ENCODE measurements at regions of chr6 and their contacts with region 1.

Region 1: GRCh38 chr6:37177077-37177934 is 7.4 kb downstream of the PIM1 start:
- DNase-seq: no peak
- ATAC-seq: no peak
- H3K4me3 Mint-ChIP-seq: peak overlapping the region in 9 of 10 donors; percentile 26 to 76 (median 49)
- H3K27ac Mint-ChIP-seq: peak overlapping the region; percentile 72 to 99 (median 86)
- H3K4me1 Mint-ChIP-seq: peaks cover 40 to 81% (median 70%) of the 10 kb centered on the region in 4 donors
- H3K27me3 Mint-ChIP-seq: no peaks in the 10 kb centered on the region

Region 2: DNA sequence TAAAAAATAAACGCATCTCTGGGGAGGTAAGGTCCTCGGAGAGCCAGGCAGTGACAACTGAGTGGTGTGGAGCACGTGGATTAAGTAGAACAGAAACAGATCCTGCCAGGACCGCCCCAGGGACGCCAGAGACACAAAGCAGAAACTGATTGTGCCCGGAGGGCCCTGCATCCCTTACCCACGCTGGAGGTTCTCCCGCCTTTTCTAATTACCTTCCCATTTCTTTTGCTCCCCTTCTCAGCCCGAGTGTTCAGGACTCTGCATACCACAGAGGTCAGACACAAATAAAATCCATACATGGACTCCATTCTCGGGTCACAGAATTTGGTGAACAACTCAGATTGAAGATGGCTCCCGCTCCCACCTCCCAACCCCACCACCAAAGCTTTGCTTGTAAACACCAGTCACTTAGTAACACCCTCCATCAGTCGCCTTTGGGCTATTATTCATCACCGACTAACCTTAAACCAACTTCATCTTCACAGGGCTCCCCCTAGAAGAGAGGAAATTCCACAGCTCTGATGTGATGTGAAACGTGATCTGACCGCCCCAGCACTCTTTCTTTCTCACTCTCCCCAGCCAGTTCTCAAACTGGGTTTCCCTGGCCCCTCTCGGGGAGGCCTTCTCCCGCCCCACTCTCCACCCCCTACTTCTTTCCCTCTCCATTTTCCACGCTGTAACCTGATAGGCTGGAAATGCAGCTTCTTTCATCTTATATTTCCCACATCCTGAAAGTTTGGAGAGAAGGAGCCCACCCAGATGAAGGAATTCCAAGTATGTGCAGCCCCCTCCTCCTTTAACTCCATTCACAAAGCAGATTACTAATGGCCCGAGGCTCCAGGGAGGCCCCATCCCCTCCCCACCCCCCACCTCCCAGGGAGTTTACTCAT is 39.9 kb before region 1 on chr6:
- POLR2A ChIA-PET with region 1: no interaction called
- DNase-seq: peak in 1 of 10 donors; percentile 9
- ATAC-seq: no peak
- H3K4me3 Mint-ChIP-seq: peak overlapping the region in 2 of 10 donors; percentile 21 to 26
- H3K27ac Mint-ChIP-seq: peak overlapping the region in 2 of 10 donors; percentile 79 to 84
- H3K4me1 Mint-ChIP-seq: peaks cover 0 to 16% (median 8%) of the 10 kb centered on the region in 4 donors
- H3K27me3 Mint-ChIP-seq: no peaks in the 10 kb centered on the region

Region 3: DNA sequence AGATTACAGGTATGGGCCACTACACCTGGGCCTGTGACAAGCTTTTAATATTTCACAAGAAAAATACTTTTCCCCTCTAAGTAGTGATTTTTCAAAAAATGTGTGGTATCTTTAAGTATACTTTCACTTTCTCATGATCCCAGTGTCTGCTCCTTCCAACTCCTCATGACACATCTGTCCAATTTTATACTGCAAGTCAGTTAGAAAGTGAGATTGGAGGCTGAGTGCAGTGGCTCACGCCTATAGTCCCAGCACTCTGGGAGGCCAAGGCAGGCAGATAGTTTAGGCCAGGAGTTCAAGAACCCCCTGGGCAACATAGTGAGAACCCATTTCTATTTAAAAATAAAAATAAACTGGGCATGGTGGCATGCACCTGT is 12.8 kb after region 1 on chr6:
- POLR2A ChIA-PET with region 1: interaction called, 14 read pairs
- DNase-seq: no peak
- ATAC-seq: no peak
- H3K4me3 Mint-ChIP-seq: peak overlapping the region in 6 of 10 donors; percentile 33 to 66 (median 45)
- H3K27ac Mint-ChIP-seq: peak overlapping the region in 7 of 10 donors; percentile 52 to 81 (median 71)
- H3K4me1 Mint-ChIP-seq: peaks cover 25 to 75% (median 63%) of the 10 kb centered on the region in 4 donors
- H3K27me3 Mint-ChIP-seq: no peaks in the 10 kb centered on the region

Measured in naive thymus-derived CD8-positive, alpha-beta T cell (primary cell).